Mammary epithelial cell (primary cell): ENCODE measurements at regions of chr3 and their contacts with region 1.

Region 1: GRCh38 chr3:156382458-156383346 is 172.2 kb downstream of the SSR3 start:
- DNase-seq: peak; percentile 20
- H3K4me3 ChIP-seq: no peak overlapping the region
- H3K27ac ChIP-seq: no peak overlapping the region
- H3K4me1 ChIP-seq: no peaks in the 10 kb centered on the region
- H3K27me3 ChIP-seq: no peaks in the 10 kb centered on the region
- CTCF ChIP-seq: peak; percentile 74 to 79

Region 2: GRCh38 chr3:156160647-156161046 is 222.1 kb before region 1 on chr3:
- CTCF ChIA-PET with region 1: no interaction called
- dilution Hi-C with region 1: no loop called
- in situ Hi-C with region 1: loop called (anchors 10 kb)
- intact Hi-C with region 1: no loop called
- DNase-seq: no peak
- H3K4me3 ChIP-seq: no peak overlapping the region
- H3K27ac ChIP-seq: no peak overlapping the region
- H3K4me1 ChIP-seq: no peaks in the 10 kb centered on the region
- H3K27me3 ChIP-seq: no peaks in the 10 kb centered on the region
- CTCF ChIP-seq: no peak

Region 3: DNA sequence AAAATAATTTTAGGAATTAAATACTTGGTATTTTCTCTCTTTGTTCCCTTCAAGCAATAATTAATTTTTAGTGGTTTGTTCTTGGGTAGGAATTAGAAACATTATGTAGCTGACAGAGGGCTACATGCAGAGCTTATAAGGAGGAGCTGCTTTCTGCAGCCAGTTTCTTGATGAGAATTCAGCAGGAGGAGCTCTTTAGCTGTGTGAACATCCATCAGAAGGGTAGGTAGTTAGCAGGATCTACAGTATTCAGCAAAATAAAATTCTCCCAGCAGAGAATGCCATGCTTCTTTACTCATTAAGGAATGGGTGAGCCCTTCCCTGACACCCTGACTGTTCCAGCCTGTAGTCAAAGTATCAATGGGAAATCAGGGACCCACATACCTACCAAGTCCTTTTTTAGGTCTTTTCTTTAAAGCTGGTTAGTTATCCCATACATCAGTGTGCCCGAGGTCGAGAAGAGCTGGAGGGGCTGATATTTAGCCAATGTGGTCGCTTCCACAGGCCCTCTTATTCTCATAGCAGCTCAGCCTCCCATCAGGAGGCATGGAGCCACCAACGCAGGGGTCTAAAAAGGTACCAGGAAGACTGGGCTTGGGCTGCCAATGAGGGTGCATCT is 208.4 kb before region 1 on chr3:
- CTCF ChIA-PET with region 1: interaction called, 17 read pairs
- dilution Hi-C with region 1: no loop called
- in situ Hi-C with region 1: loop called (anchors 10 kb)
- intact Hi-C with region 1: loop called (anchors 1 kb)
- DNase-seq: peak; percentile 44
- H3K4me3 ChIP-seq: no peak overlapping the region
- H3K27ac ChIP-seq: no peak overlapping the region
- H3K4me1 ChIP-seq: peaks cover 7% of the 10 kb centered on the region
- H3K27me3 ChIP-seq: no peaks in the 10 kb centered on the region
- CTCF ChIP-seq: peak; percentile 26 to 70

Region 4: DNA sequence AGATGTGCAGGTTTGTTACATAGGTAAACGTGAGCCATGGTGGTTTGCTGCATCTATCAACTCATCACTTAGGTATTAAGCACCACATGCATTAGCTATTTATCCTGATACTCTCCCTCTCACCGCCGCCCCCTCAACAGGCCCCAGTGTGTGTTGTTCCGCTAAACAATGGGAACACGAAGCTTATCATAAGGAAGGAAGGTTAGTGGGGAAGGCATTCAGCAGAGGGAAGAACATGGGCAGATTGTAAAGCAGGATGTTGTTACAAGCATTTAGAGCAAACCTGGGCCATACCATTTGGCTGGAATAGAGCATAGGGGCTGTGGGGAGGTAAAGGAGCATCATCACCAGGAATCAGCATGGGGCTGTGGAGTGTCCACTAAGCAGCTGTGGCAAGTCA is 60.4 kb after region 1 on chr3:
- CTCF ChIA-PET with region 1: no interaction called
- dilution Hi-C with region 1: no loop called
- in situ Hi-C with region 1: no loop called
- intact Hi-C with region 1: loop called (anchors 5 kb)
- DNase-seq: no peak
- H3K4me3 ChIP-seq: no peak overlapping the region
- H3K27ac ChIP-seq: no peak overlapping the region
- H3K4me1 ChIP-seq: no peaks in the 10 kb centered on the region
- H3K27me3 ChIP-seq: no peaks in the 10 kb centered on the region
- CTCF ChIP-seq: no peak

Region 5: GRCh38 chr3:156460206-156460611 is 77.5 kb after region 1 on chr3:
- CTCF ChIA-PET with region 1: no interaction called
- dilution Hi-C with region 1: no loop called
- in situ Hi-C with region 1: no loop called
- intact Hi-C with region 1: no loop called
- DNase-seq: no peak
- H3K4me3 ChIP-seq: no peak overlapping the region
- H3K27ac ChIP-seq: no peak overlapping the region
- H3K4me1 ChIP-seq: peaks cover 7% of the 10 kb centered on the region
- H3K27me3 ChIP-seq: no peaks in the 10 kb centered on the region
- CTCF ChIP-seq: no peak

Region 6: DNA sequence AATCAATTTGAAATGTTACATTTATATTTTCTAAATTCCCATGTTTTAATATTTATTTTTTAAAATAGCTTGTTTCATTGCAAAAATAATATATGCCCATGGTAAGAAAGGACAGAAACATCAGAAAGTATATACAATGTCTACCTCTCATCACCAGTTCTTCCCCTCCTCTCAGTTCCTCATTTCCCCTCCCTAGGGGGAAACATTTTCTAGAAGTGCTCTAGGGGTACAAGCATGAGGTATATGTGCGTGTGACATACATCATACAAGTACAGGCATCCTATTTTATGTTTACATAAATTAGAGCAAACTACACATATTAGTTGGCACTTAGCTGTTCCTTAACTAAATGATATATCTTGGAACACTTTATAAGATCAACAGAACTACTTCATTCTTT is 1309.8 kb after region 1 on chr3:
- CTCF ChIA-PET with region 1: no interaction called
- dilution Hi-C with region 1: no loop called
- in situ Hi-C with region 1: no loop called
- intact Hi-C with region 1: no loop called
- DNase-seq: no peak
- H3K4me3 ChIP-seq: no peak overlapping the region
- H3K27ac ChIP-seq: no peak overlapping the region
- H3K4me1 ChIP-seq: no peaks in the 10 kb centered on the region
- H3K27me3 ChIP-seq: no peaks in the 10 kb centered on the region
- CTCF ChIP-seq: no peak